Transverse colon (tissue), 4 donors: ENCODE measurements at regions of chr7 and their contacts with region 1.

Region 1: DNA sequence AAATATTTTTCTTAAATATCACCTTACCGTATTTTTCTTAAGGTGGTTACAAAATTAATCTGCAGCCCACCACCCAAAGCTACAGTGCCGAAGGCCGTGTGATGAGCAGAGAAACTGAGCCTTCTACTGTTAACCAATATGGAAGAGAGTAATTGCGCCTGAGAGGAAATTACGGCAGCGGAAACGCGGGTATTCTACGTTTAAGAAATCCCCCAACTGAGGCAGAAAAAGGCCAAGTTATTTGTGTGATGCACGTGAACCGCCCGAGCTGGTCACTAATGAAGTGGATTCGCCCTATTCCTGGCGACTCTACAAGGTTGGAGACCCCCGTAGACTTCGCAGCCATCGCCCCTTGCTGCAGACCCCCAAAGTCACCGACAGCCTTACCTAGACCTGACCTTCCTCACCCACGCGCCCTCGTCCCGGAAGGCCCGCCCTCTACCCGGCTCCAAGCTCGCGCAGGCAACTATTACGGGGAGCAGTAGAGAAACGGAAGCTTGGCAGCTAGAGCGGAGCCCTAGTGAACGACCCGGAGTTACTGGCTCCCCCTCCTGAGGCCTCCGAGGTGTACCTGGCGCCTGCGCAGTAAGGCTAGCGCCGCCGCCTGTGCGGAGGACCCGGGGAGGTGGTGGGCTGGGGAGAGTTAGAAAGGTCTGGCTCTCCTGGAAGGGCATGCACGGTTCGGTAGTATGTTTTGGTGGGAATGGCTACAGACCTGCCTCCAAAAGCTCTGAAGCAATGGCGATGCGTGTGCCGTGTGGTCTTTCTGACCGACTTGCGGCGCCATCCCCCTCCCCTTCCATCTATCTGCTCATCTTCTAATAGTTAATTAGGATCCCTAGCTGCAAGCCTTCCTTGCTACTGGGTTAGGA is at the start of gene MRPS33:
- DNase-seq: peak; percentile 96
- H3K4me3 ChIP-seq: peak within 1 kb of the TSS; percentile 47 to 65 (median 58)
- H3K27ac ChIP-seq: peak within 1 kb of the TSS; percentile 86 to 93 (median 90)
- H3K4me1 ChIP-seq: peaks cover 3 to 34% (median 17%) of the 10 kb centered on the region in 4 donors
- H3K27me3 ChIP-seq: peaks cover 26% of the 10 kb centered on the region
- CTCF ChIP-seq: peak in 3 of 5 experiments; percentile 13 to 24 (median 16)
- EP300 ChIP-seq: no peak
- POLR2A ChIP-seq: peak; percentile 87
- total RNA-seq, gene MRPS33: 0.60 to 37.1 (median 12.0) TPM

Region 2: DNA sequence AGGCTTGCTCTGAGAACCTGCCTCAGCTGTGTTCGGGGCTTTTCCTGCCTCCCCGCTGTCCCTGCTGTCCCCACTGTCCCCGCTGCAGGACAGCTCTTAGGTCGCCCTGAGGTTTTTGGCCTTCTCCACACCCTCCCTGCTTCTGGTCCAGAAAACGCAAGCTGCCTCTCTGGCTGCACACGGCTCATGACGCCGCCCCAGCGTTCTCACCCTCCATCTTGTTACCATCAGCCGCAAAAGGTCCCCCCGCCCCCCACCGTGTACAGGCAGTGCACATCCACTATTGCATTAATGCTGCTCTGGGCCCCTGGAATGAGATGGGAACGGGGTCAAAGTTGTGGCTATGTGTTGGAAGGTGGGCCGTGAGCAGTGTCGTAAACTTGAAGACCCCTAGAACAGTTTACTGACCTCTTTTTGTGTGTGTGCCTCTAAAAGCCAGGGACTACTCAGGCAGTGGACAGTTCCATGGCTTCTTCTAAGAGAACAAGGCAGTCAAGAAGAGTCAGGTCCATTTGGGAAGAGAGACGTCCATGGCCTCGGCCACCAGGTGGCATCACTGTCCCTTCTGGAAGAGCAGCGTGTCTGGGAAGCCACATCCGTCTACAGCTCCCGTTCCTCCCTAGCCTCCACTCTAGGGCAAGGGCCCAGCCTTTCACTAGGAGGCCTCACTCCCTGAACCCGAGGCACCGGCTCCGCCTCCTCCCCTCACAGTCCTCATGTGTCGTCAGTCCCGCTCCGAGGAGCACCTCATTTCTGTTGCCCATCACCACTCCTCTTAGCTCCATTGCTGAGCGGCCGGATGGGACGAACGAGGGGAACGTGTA is 497.0 kb before region 1 on chr7:
- in situ Hi-C with region 1: loop called in 2 of 4 experiments (anchors 25 kb)
- intact Hi-C with region 1: no loop called
- DNase-seq: peak; percentile 94
- H3K4me3 ChIP-seq: peak overlapping the region in 1 of 4 donors; percentile 36
- H3K27ac ChIP-seq: peak overlapping the region; percentile 89 to 91 (median 90)
- H3K4me1 ChIP-seq: peaks cover 10 to 23% (median 15%) of the 10 kb centered on the region in 4 donors
- H3K27me3 ChIP-seq: no peaks in the 10 kb centered on the region
- CTCF ChIP-seq: peak; percentile 73 to 95 (median 87)
- EP300 ChIP-seq: no peak
- POLR2A ChIP-seq: peak; percentile 21

Region 3: GRCh38 chr7:140696680-140697446 is 317.9 kb before region 1 on chr7 and contains the start of gene NDUFB2:
- in situ Hi-C with region 1: loop called (anchors 25 kb)
- intact Hi-C with region 1: no loop called
- DNase-seq: peak; percentile 81
- H3K4me3 ChIP-seq: peak within 1 kb of the TSS; percentile 74 to 83 (median 81)
- H3K27ac ChIP-seq: peak within 1 kb of the TSS; percentile 89 to 93 (median 92)
- H3K4me1 ChIP-seq: peaks cover 12 to 25% (median 18%) of the 10 kb centered on the region in 4 donors
- H3K27me3 ChIP-seq: no peaks in the 10 kb centered on the region
- CTCF ChIP-seq: peak in 1 of 5 experiments; percentile 26
- EP300 ChIP-seq: no peak
- POLR2A ChIP-seq: peak; percentile 93
- total RNA-seq, gene NDUFB2: 69.9 to 284 (median 230) TPM

Region 4: GRCh38 chr7:140810830-140811556 is 203.8 kb before region 1 on chr7:
- in situ Hi-C with region 1: loop called (anchors 5 to 25 kb)
- intact Hi-C with region 1: loop called (anchors 5 kb)
- DNase-seq: peak; percentile 50
- H3K4me3 ChIP-seq: no peak overlapping the region
- H3K27ac ChIP-seq: no peak overlapping the region
- H3K4me1 ChIP-seq: peaks cover 0 to 5% (median 0%) of the 10 kb centered on the region in 4 donors
- H3K27me3 ChIP-seq: no peaks in the 10 kb centered on the region
- CTCF ChIP-seq: peak; percentile 65 to 79 (median 73)
- EP300 ChIP-seq: no peak
- POLR2A ChIP-seq: no peak

Region 5: GRCh38 chr7:140924019-140924820 is 90.5 kb before region 1 on chr7:
- in situ Hi-C with region 1: loop called in 1 of 4 experiments (anchors 10 kb)
- intact Hi-C with region 1: no loop called
- DNase-seq: peak; percentile 79
- H3K4me3 ChIP-seq: peak overlapping the region; percentile 61 to 100 (median 98)
- H3K27ac ChIP-seq: peak overlapping the region; percentile 94 to 100 (median 98)
- H3K4me1 ChIP-seq: peaks cover 8 to 38% (median 15%) of the 10 kb centered on the region in 4 donors
- H3K27me3 ChIP-seq: no peaks in the 10 kb centered on the region
- CTCF ChIP-seq: peak; percentile 12 to 43 (median 28)
- EP300 ChIP-seq: no peak
- POLR2A ChIP-seq: no peak

Region 6: DNA sequence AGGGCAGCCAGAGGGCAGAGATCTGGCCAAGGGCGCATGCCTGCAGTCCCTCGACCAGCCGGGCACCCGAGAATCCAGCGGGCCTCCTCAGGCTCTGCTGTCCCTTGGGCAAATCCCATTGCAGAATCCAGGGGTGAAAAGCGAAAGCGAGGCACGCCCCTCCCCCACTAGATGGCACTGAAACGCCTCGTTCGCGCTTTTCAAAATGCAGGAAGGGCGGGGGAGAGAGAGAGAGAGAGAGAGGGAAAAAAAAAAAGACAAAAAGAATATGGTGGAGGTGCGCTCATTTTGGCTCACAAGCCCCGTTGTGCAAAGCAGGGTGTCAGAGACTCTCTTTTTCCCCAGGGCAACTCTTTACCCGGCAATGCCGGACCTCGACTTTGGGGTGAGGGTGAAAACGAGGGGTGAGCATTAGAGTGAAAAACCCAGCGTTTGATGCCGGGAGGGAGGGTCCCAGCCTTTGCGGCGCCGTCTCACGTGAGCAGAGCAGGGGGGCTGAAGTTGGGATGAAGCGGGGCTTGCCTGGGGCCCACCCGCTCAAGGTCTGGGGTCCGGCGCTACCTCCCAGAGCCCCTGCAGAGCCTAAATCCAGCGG is 56.6 kb after region 1 on chr7:
- in situ Hi-C with region 1: no loop called
- intact Hi-C with region 1: no loop called
- DNase-seq: peak; percentile 10
- H3K4me3 ChIP-seq: peak overlapping the region in 3 of 4 donors; percentile 30 to 49 (median 38)
- H3K27ac ChIP-seq: no peak overlapping the region
- H3K4me1 ChIP-seq: peaks cover 7 to 42% (median 32%) of the 10 kb centered on the region in 4 donors
- H3K27me3 ChIP-seq: peaks cover 74% of the 10 kb centered on the region
- CTCF ChIP-seq: no peak
- EP300 ChIP-seq: no peak
- POLR2A ChIP-seq: no peak

Region 7: DNA sequence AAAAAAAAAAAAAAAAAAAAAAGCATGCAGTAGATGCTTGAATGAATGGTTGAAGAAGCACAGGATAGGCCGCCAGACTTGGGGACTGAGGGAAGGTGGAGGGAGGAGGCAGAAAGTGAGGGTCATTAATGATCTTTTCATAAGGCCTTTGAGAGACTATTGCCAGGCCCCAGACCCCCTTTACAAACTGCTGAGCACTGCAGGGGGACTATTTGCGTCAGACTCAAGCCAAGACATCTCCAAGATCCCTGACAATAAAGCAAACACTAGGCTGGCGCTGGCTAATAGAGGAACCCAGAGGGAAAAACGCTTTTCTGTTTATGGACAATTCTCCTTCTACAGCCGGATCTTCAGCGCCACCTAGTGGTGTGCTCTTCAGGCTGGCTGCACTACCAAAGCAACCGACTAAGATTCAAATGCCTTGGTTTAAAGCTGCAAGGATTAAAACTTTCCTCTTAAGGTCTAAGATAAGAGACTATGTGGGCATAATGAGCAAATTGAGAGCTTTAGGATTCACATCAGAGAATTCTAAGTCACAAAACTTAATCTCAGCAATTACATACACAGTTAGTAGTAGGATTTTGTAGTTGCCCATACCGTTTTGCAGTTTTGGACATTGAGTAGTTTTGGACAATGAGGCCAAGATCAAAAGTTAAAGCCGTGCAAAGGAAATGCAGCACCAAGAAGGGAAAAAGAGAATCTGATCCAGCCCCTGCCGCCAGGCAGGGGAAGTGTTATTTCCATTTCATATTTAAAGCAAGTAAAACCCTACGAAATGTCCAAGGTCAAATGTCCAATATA is 518.6 kb after region 1 on chr7:
- in situ Hi-C with region 1: loop called in 1 of 4 experiments (anchors 25 kb)
- intact Hi-C with region 1: no loop called
- DNase-seq: peak; percentile 64
- H3K4me3 ChIP-seq: no peak overlapping the region
- H3K27ac ChIP-seq: no peak overlapping the region
- H3K4me1 ChIP-seq: peaks cover 0 to 2% (median 0%) of the 10 kb centered on the region in 4 donors
- H3K27me3 ChIP-seq: peaks cover 9% of the 10 kb centered on the region
- CTCF ChIP-seq: peak; percentile 67 to 94 (median 90)
- EP300 ChIP-seq: no peak
- POLR2A ChIP-seq: no peak

Region 8: DNA sequence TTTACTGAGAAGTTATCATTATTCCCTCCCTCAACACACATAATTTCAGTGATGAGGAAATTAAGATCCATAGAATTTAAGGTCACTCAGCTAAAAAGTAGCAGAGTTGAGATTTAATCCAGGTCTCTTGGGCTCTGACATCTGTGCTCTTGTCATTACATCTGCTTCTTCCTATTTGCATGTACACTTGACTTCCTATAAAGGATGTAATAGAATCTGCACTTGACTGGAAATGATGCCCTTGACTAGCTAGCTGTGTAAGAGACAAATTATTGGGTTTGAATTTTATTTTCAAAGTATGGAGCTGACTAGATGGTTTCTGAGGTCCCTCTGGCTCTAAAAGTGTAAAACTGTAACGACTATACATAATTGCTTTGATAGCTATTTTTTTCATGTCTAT is 595.9 kb after region 1 on chr7:
- in situ Hi-C with region 1: no loop called
- intact Hi-C with region 1: no loop called
- DNase-seq: no peak
- H3K4me3 ChIP-seq: no peak overlapping the region
- H3K27ac ChIP-seq: no peak overlapping the region
- H3K4me1 ChIP-seq: no peaks in the 10 kb centered on the region
- H3K27me3 ChIP-seq: no peaks in the 10 kb centered on the region
- CTCF ChIP-seq: no peak
- EP300 ChIP-seq: no peak
- POLR2A ChIP-seq: no peak

Region 9: DNA sequence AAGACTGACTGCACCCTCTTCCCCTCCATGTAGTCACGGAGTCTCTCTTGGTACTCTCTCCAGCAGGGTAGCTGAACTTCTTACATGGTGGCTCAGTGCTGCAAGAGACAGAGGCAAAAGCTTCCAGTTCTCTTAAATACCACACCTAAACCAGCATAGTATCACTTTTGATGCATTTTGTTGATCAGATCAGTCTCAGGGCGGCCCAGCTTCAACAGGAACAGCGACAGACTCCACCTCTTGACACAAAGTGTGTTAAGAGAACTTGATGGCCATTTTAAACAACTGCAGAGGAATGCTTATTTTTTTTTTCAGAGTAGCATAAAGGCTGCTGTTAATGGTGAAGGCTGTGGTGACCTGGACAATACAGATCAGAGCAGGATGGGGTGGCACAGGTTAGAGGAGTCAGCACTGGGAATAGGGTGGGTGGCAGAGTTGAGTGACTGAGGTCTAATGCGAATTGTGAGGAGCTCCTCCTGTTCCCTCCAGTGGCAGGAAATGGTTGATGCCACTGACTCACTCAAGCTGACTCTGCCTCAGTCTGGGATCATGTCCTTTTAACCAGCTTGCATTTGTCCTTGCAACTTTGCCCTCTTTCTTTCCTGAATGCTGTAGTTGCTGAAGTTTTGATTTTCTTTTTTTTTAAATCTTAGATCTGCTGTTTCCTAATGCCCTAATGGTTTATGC is 998.2 kb after region 1 on chr7:
- in situ Hi-C with region 1: no loop called
- intact Hi-C with region 1: no loop called
- DNase-seq: no peak
- H3K4me3 ChIP-seq: no peak overlapping the region
- H3K27ac ChIP-seq: no peak overlapping the region
- H3K4me1 ChIP-seq: peaks cover 0 to 24% (median 1%) of the 10 kb centered on the region in 4 donors
- H3K27me3 ChIP-seq: no peaks in the 10 kb centered on the region
- CTCF ChIP-seq: no peak
- EP300 ChIP-seq: no peak
- POLR2A ChIP-seq: no peak